ENCODE measurements at regions of chr6 and their contacts with region 1.

Region 1: GRCh38 chr6:46090115-46091079 is 39.4 kb upstream of the ENPP4 start:
- DNase-seq: peak; percentile 69
- ATAC-seq: peak; percentile 63
- H3K4me3 ChIP-seq: no peak overlapping the region
- H3K27ac ChIP-seq: no peak overlapping the region
- H3K4me1 ChIP-seq: no peaks in the 10 kb centered on the region
- H3K27me3 ChIP-seq: peaks cover 33% of the 10 kb centered on the region; the same call in 1 of the 2 replicates
- CTCF ChIP-seq: peak; percentile 89

Region 2: GRCh38 chr6:45930420-45931040 is 159.9 kb before region 1 on chr6:
- CTCF ChIA-PET with region 1: interaction called, 8 read pairs
- POLR2A ChIA-PET with region 1: no interaction called
- intact Hi-C with region 1: loop called (anchors 1 kb)
- DNase-seq: peak; percentile 82
- ATAC-seq: peak; percentile 86
- H3K4me3 ChIP-seq: no peak overlapping the region
- H3K27ac ChIP-seq: no peak overlapping the region
- H3K4me1 ChIP-seq: no peaks in the 10 kb centered on the region
- H3K27me3 ChIP-seq: peaks cover 22% of the 10 kb centered on the region
- CTCF ChIP-seq: peak; percentile 98

Region 3: GRCh38 chr6:46207174-46207573 is 116.8 kb after region 1 on chr6:
- CTCF ChIA-PET with region 1: interaction called, 10 read pairs
- POLR2A ChIA-PET with region 1: no interaction called
- intact Hi-C with region 1: loop called (anchors 1 kb)
- DNase-seq: peak; percentile 18
- ATAC-seq: no peak
- H3K4me3 ChIP-seq: no peak overlapping the region
- H3K27ac ChIP-seq: no peak overlapping the region
- H3K4me1 ChIP-seq: no peaks in the 10 kb centered on the region
- H3K27me3 ChIP-seq: peaks cover 18% of the 10 kb centered on the region
- CTCF ChIP-seq: no peak

Region 4: DNA sequence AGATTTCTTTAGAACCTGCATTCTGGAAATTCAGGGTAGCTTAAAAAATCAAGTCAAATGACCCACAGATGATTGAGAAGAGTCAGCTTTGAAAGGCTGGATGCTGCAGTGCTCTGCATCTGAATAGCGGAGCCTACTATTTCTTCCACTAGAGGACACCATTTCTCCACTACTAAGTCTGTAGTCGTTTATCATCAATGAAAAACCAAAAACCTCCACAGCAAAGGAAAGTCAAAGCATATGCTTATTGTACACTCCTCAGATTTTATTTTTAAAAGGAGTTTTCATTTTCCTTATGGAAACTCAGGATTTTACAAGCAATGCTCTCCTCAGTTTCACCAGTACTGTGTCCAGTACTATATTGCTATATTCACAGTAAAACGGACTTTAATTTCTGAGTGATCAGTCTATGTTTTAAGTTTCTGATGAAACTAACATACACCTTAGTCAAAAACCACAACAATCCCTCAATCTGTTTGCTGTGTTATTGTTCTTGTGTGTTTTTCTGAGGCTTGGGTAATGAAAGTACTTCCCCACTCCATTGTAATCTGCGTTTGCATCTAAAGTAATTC is 130.9 kb after region 1 on chr6:
- CTCF ChIA-PET with region 1: interaction called, 10 read pairs
- POLR2A ChIA-PET with region 1: no interaction called
- intact Hi-C with region 1: loop called (anchors 1 kb)
- DNase-seq: peak; percentile 70
- ATAC-seq: peak; percentile 69
- H3K4me3 ChIP-seq: no peak overlapping the region
- H3K27ac ChIP-seq: no peak overlapping the region
- H3K4me1 ChIP-seq: no peaks in the 10 kb centered on the region
- H3K27me3 ChIP-seq: peaks cover 50% of the 10 kb centered on the region
- CTCF ChIP-seq: peak; percentile 87

Region 5: GRCh38 chr6:46410334-46410953 is 320.0 kb after region 1 on chr6:
- CTCF ChIA-PET with region 1: interaction called, 28 read pairs
- POLR2A ChIA-PET with region 1: interaction called, 6 read pairs
- intact Hi-C with region 1: loop called (anchors 1 kb)
- DNase-seq: peak; percentile 62
- ATAC-seq: no peak
- H3K4me3 ChIP-seq: no peak overlapping the region
- H3K27ac ChIP-seq: no peak overlapping the region
- H3K4me1 ChIP-seq: no peaks in the 10 kb centered on the region
- H3K27me3 ChIP-seq: peaks cover 22% of the 10 kb centered on the region
- CTCF ChIP-seq: peak; percentile 93

Region 6: DNA sequence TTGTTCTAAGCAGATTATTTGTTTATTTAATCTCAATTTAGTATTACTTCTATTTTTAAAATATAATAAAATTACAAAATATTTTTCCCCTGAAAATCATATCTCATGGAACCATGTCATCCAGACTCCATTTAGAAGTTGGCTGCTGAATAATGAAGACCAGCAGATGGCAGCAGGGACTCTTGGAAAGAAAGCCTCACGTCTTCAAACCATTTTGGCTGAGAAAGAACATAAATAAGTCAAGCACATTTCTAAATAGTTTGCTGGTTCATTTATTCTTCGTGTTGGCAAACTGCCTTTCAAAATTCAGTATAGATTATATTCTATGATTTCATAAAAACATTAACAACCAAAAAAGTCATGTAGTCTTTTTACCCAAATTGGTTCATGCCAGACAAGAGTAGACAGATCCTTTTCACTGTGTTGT is 329.2 kb after region 1 on chr6:
- CTCF ChIA-PET with region 1: interaction called, 10 read pairs
- POLR2A ChIA-PET with region 1: no interaction called
- intact Hi-C with region 1: no loop called
- DNase-seq: peak; percentile 83
- ATAC-seq: 0 out of 2 replicates have a peak, but pooled peaks have one; percentile 43
- H3K4me3 ChIP-seq: no peak overlapping the region
- H3K27ac ChIP-seq: no peak overlapping the region
- H3K4me1 ChIP-seq: peaks cover 8% of the 10 kb centered on the region
- H3K27me3 ChIP-seq: peaks cover 6% of the 10 kb centered on the region; the same call in 1 of the 2 replicates
- CTCF ChIP-seq: peak; percentile 76

Measured in PC-3 (cell line).